ENCODE measurements at regions of chr15 and their contacts with region 1.

Region 1: DNA sequence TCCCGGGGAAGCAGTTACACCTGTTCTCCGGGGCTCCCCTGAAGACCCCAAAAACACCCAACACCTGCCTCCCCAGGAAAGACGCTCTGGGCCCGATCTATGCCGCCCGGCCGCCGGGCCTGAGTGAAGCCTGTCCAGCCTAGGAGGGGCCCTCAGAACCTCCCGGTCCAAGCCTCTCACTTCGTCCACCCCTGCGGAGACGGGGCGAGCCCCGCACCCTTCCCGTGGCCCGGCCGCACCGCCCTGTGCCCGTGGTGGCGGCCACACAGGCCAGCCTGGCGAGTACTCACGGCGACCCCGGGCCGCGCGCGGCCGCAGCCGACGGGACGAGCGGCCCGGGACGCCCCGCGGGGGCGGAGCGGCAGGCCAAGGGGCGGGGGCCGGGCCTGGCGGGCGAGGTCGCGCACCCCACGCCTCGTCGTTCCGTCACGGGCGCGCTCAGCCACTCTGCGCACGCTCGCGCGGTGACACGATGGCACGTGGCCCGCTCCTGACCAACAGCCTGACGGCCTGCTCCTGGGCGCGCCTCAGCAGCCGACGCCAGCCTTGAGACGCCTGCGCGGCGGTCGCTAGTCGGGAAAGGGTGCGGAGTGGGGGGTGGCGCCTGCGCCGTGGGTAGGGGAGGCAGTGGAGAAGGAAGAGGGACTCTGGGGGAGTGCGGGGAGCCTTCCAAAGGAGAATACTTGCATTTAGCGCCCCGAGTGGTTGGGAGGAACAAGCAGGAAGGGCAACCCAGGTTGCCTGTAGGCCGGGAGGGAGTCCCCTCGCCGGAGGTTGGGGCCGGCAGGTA is at the start of gene PARP6:
- DNase-seq: peak; percentile 98
- ATAC-seq: peak; percentile 94
- H3K4me3 ChIP-seq: peak within 1 kb of the TSS; percentile 53 to 88 (median 82)
- H3K4me3 Mint-ChIP-seq: peak within 1 kb of the TSS; percentile 89
- H3K27ac ChIP-seq: peak within 1 kb of the TSS; percentile 71 to 80
- H3K27ac Mint-ChIP-seq: peak within 1 kb of the TSS; percentile 96
- H3K4me1 ChIP-seq: peaks cover 16 to 23% of the 10 kb centered on the region in 2 donors
- H3K4me1 Mint-ChIP-seq: peaks cover 38% of the 10 kb centered on the region
- H3K27me3 ChIP-seq: no peaks in the 10 kb centered on the region
- H3K27me3 Mint-ChIP-seq: no peaks in the 10 kb centered on the region
- CTCF ChIP-seq: peak; percentile 57
- total RNA-seq, gene PARP6: 118 and 130 TPM in 2 replicates

Region 2: GRCh38 chr15:71743861-71744382 is 528.5 kb before region 1 on chr15:
- CTCF ChIA-PET with region 1: no interaction called
- POLR2A ChIA-PET with region 1: no interaction called
- intact Hi-C with region 1: no loop called
- DNase-seq: peak; percentile 62
- ATAC-seq: no peak
- H3K4me3 ChIP-seq: no peak overlapping the region
- H3K4me3 Mint-ChIP-seq: no peak overlapping the region
- H3K27ac ChIP-seq: no peak overlapping the region
- H3K27ac Mint-ChIP-seq: no peak overlapping the region
- H3K4me1 ChIP-seq: no peaks in the 10 kb centered on the region
- H3K4me1 Mint-ChIP-seq: no peaks in the 10 kb centered on the region
- H3K27me3 ChIP-seq: no peaks in the 10 kb centered on the region
- H3K27me3 Mint-ChIP-seq: peaks cover 20% of the 10 kb centered on the region
- CTCF ChIP-seq: peak; percentile 90

Region 3: GRCh38 chr15:72117486-72118399 is 154.7 kb before region 1 on chr15 and contains the start of gene MYO9A:
- CTCF ChIA-PET with region 1: no interaction called
- POLR2A ChIA-PET with region 1: no interaction called
- intact Hi-C with region 1: loop called (anchors 1 kb)
- DNase-seq: peak; percentile 100
- ATAC-seq: peak; percentile 74
- H3K4me3 ChIP-seq: peak within 1 kb of the TSS; percentile 72 to 94 (median 86)
- H3K4me3 Mint-ChIP-seq: peak within 1 kb of the TSS; percentile 94
- H3K27ac ChIP-seq: peak within 1 kb of the TSS; percentile 85
- H3K27ac Mint-ChIP-seq: peak within 1 kb of the TSS; percentile 99
- H3K4me1 ChIP-seq: peaks cover 14 to 17% of the 10 kb centered on the region in 2 donors
- H3K4me1 Mint-ChIP-seq: peaks cover 36% of the 10 kb centered on the region
- H3K27me3 ChIP-seq: no peaks in the 10 kb centered on the region
- H3K27me3 Mint-ChIP-seq: no peaks in the 10 kb centered on the region
- CTCF ChIP-seq: no peak
- total RNA-seq, gene MYO9A: 66.1 and 75.5 TPM in 2 replicates

Region 4: DNA sequence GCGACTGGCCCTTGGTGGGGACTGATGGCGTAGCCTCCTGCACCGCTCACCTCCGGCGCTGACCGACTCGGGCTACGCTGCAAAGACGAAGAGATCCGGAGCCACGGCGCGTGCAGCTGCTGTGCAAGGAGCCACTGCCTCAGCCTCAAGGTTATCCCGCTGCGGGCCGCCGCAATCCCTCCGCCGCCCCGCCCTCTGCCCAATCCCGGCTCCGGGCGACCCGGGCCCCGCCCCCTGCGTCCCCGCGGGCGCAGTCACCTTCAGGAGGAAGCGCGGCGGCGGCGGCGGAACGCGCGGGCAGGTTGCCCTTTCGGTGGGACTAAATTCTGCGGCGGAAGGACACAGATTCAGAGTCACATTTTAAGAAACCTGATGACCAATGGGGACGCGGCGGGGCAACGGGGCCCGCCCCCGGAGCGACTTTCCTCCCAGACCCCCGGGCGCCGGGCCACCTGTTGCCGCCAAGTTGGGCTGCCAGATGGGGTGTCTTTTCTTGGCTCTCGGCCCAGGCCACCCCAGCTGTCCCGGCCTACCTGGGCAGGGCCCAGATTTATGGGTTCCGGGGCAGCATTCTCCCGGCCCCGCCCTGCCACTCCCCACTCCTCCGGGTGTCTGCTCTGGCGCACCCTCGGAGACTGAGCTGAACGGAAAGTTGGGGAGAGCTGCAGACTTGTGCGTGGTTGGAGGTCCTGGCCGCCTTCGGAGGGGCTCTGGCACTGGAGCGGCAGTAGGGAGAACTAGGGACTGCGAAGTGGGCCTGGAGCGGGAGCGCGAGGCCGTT is 41.2 kb before region 1 on chr15 and contains the start of gene PKM:
- CTCF ChIA-PET with region 1: interaction called, 16 read pairs
- POLR2A ChIA-PET with region 1: interaction called, 4 read pairs
- intact Hi-C with region 1: loop called (anchors 1 kb)
- DNase-seq: peak; percentile 96
- ATAC-seq: peak; percentile 52
- H3K4me3 ChIP-seq: peak within 1 kb of the TSS; percentile 77 to 96 (median 93)
- H3K4me3 Mint-ChIP-seq: peak within 1 kb of the TSS; percentile 94
- H3K27ac ChIP-seq: peak within 1 kb of the TSS; percentile 91 to 94
- H3K27ac Mint-ChIP-seq: peak within 1 kb of the TSS; percentile 97
- H3K4me1 ChIP-seq: peaks cover 37 to 44% of the 10 kb centered on the region in 2 donors
- H3K4me1 Mint-ChIP-seq: peaks cover 38% of the 10 kb centered on the region
- H3K27me3 ChIP-seq: no peaks in the 10 kb centered on the region
- H3K27me3 Mint-ChIP-seq: no peaks in the 10 kb centered on the region
- CTCF ChIP-seq: no peak
- total RNA-seq, gene PKM: 306 and 323 TPM in 2 replicates

Region 5: GRCh38 chr15:72319985-72320671 is 47.7 kb after region 1 on chr15 and contains the start of gene CELF6:
- CTCF ChIA-PET with region 1: no interaction called
- POLR2A ChIA-PET with region 1: no interaction called
- intact Hi-C with region 1: loop called (anchors 2 kb)
- DNase-seq: peak; percentile 96
- ATAC-seq: peak; percentile 75
- H3K4me3 ChIP-seq: peak within 1 kb of the TSS; percentile 8 to 69 (median 55)
- H3K4me3 Mint-ChIP-seq: peak within 1 kb of the TSS; percentile 88
- H3K27ac ChIP-seq: peak within 1 kb of the TSS in 1 of 2 donors; percentile 37
- H3K27ac Mint-ChIP-seq: peak within 1 kb of the TSS; percentile 83
- H3K4me1 ChIP-seq: peaks cover 10 to 19% of the 10 kb centered on the region in 2 donors
- H3K4me1 Mint-ChIP-seq: peaks cover 25% of the 10 kb centered on the region
- H3K27me3 ChIP-seq: no peaks in the 10 kb centered on the region
- H3K27me3 Mint-ChIP-seq: no peaks in the 10 kb centered on the region
- CTCF ChIP-seq: no peak
- total RNA-seq, gene CELF6: 4.3 and 5.3 TPM in 2 replicates

Region 6: DNA sequence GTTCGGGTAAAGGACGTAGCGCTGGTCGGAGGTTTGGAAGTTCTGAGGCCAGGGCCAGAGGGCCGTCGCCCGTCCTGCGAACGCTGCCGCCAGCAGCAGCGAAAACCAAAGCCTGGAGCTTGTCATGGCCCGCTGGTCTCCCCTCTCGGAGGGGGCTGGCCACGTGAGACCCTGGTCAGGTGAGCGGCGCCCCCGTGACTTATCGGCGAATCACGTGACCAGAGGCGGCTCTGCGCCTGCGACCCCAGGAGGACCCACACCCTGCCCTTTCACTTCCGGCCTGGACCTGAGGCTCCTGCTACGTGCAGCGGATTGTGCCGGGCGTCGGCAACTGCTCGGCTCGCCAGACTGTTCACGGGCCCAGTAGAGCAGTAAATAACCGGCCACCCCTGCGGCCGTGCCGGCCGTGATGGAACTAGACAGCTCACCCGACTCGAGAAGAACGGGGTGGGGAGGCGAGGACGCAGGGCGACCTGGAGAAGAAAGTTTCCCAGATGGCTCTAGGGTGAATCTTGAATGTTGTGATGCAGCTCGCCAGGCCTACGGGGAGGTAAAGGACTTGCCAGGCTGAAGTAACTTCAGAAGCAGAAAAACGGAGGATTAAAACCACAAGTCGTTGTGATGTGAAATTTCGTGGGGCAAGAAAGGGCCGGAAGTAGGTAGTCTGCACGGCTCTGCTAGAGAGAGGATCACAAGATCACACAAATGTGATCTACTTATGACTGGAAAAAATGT is 103.6 kb after region 1 on chr15 and contains the start of gene HEXA:
- CTCF ChIA-PET with region 1: interaction called, 4 read pairs
- POLR2A ChIA-PET with region 1: no interaction called
- intact Hi-C with region 1: loop called (anchors 2 kb)
- DNase-seq: peak; percentile 98
- ATAC-seq: peak; percentile 85
- H3K4me3 ChIP-seq: peak within 1 kb of the TSS; percentile 72 to 92 (median 85)
- H3K4me3 Mint-ChIP-seq: peak within 1 kb of the TSS; percentile 98
- H3K27ac ChIP-seq: peak within 1 kb of the TSS; percentile 85 to 95
- H3K27ac Mint-ChIP-seq: peak within 1 kb of the TSS; percentile 100
- H3K4me1 ChIP-seq: peaks cover 44 to 46% of the 10 kb centered on the region in 2 donors
- H3K4me1 Mint-ChIP-seq: peaks cover 54% of the 10 kb centered on the region
- H3K27me3 ChIP-seq: no peaks in the 10 kb centered on the region
- H3K27me3 Mint-ChIP-seq: no peaks in the 10 kb centered on the region
- CTCF ChIP-seq: no peak
- total RNA-seq, gene HEXA: 151 and 154 TPM in 2 replicates

Region 7: GRCh38 chr15:72685925-72686794 is 413.8 kb after region 1 on chr15 and contains the starts of genes BBS4 and HIGD2B:
- CTCF ChIA-PET with region 1: no interaction called
- POLR2A ChIA-PET with region 1: no interaction called
- intact Hi-C with region 1: loop called (anchors 2 kb)
- DNase-seq: peak; percentile 91
- ATAC-seq: peak; percentile 94
- H3K4me3 ChIP-seq: peak within 1 kb of the TSS; percentile 70 to 98 (median 88)
- H3K4me3 Mint-ChIP-seq: peak within 1 kb of the TSS; percentile 97
- H3K27ac ChIP-seq: peak within 1 kb of the TSS; percentile 77 to 91
- H3K27ac Mint-ChIP-seq: peak within 1 kb of the TSS; percentile 94
- H3K4me1 ChIP-seq: peaks cover 11 to 12% of the 10 kb centered on the region in 2 donors
- H3K4me1 Mint-ChIP-seq: peaks cover 25% of the 10 kb centered on the region
- H3K27me3 ChIP-seq: no peaks in the 10 kb centered on the region
- H3K27me3 Mint-ChIP-seq: no peaks in the 10 kb centered on the region
- CTCF ChIP-seq: no peak
- total RNA-seq, gene BBS4: 25.7 and 34.9 TPM in 2 replicates
- total RNA-seq, gene HIGD2B: 0.52 and 1.4 TPM in 2 replicates